PC-9 (cell line): ENCODE measurements at regions of chr9 and their contacts with region 1.

Region 1: DNA sequence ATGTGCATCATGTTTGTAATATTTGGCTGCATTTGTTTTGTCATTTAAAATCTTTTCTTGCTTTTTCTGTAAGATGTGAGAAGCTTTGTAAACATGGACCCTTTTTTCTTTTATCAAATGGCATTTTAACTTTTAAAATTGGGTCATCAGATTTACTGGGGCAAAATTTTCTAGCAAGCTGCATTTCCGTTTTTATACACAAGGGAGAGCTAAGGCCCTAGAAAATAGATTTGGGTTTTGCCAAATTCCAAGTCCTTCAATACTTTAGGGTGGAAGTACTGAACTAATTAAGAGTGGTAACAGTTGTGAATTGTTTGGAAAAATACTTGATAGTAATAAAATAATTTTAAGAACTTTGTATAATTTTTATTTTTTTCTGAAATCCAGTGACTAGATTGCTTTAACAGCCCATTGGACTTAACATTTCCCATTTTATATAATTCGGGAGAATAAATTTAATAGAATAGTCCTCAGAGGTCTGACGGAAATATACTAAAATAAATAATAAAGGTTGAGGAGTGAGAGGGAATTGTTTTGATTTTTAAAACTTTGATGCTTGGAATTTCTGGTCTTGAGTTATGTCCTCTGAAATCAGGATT is 117.4 kb downstream of the SMARCA2 start:
- DNase-seq: no peak
- H3K4me3 ChIP-seq: no peak overlapping the region
- H3K27ac ChIP-seq: no peak overlapping the region
- H3K4me1 ChIP-seq: no peaks in the 10 kb centered on the region
- H3K27me3 ChIP-seq: no peaks in the 10 kb centered on the region
- CTCF ChIP-seq: peak; percentile 76

Region 2: GRCh38 chr9:2066312-2067273 is 66.0 kb before region 1 on chr9:
- CTCF ChIA-PET with region 1: no interaction called
- POLR2A ChIA-PET with region 1: no interaction called
- intact Hi-C with region 1: no loop called
- DNase-seq: no peak
- H3K4me3 ChIP-seq: no peak overlapping the region
- H3K27ac ChIP-seq: no peak overlapping the region
- H3K4me1 ChIP-seq: no peaks in the 10 kb centered on the region
- H3K27me3 ChIP-seq: no peaks in the 10 kb centered on the region
- CTCF ChIP-seq: no peak

Region 3: GRCh38 chr9:2321523-2322151 is 189.1 kb after region 1 on chr9:
- CTCF ChIA-PET with region 1: no interaction called
- POLR2A ChIA-PET with region 1: no interaction called
- intact Hi-C with region 1: no loop called
- DNase-seq: no peak
- H3K4me3 ChIP-seq: no peak overlapping the region
- H3K27ac ChIP-seq: no peak overlapping the region
- H3K4me1 ChIP-seq: no peaks in the 10 kb centered on the region
- H3K27me3 ChIP-seq: no peaks in the 10 kb centered on the region
- CTCF ChIP-seq: 0 out of 2 replicates have a peak, but pooled peaks have one; percentile 30

Region 4: DNA sequence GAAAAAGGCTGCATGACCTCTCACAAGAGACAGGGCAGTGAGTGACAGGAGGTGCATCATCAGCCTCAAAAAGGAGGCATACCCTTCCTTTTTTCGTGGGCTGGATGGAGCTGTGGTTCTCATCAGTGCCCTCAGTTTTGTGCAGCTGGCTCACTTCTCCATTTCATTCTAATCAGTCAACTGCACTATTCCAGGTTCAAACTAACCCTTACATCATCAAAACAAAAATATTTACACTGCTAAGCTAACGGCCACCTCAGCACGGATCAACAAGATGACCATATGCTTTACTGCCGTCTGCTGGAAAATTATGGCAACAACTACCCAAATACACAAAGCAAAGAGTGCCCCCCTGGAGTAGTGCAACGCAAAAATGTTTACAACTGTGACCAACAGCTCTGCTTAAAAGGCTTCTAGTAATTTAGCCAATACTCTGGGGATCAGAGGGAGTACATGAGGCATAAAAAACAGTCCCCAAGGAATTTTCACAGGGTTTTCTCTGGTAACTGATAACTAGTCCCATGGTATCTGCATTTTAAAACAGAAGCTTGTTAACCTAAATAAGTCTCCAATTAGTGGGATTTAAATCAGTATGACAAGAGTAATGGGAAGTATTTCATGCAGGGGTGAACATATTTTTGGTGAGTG is 595.5 kb after region 1 on chr9:
- CTCF ChIA-PET with region 1: no interaction called
- POLR2A ChIA-PET with region 1: no interaction called
- intact Hi-C with region 1: loop called (anchors 5 kb)
- DNase-seq: no peak
- H3K4me3 ChIP-seq: no peak overlapping the region
- H3K27ac ChIP-seq: no peak overlapping the region
- H3K4me1 ChIP-seq: no peaks in the 10 kb centered on the region
- H3K27me3 ChIP-seq: no peaks in the 10 kb centered on the region
- CTCF ChIP-seq: peak; percentile 60

Region 5: DNA sequence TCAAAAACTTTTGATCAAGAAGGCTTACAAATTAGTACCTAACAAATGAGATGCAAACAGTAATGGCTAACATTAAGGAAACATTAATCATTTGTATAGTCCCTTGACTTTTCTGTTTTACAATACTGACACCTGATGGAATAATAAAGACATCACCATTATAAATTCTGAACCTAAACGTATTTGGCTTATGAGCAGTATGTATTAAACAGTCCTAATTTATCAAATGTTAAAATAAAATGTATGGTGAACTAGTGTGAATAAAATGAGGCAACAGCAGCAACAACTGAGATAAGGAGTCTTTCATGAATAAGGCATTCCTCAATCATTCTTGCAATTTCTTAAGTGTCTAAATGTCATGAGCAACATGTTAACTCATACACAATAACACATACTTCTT is 705.3 kb after region 1 on chr9:
- CTCF ChIA-PET with region 1: no interaction called
- POLR2A ChIA-PET with region 1: no interaction called
- intact Hi-C with region 1: loop called (anchors 5 kb)
- DNase-seq: no peak
- H3K4me3 ChIP-seq: no peak overlapping the region
- H3K27ac ChIP-seq: no peak overlapping the region
- H3K4me1 ChIP-seq: peaks cover 13% of the 10 kb centered on the region
- H3K27me3 ChIP-seq: no peaks in the 10 kb centered on the region
- CTCF ChIP-seq: peak; percentile 28; the same call in 1 of the 2 replicates